Psoas muscle (tissue), 8 donors: ENCODE measurements at regions of chr3 and their contacts with region 1.

Region 1: GRCh38 chr3:24101676-24102168 is 156.6 kb downstream of the NR1D2 start:
- DNase-seq: no peak
- ATAC-seq: no peak
- H3K4me3 ChIP-seq: no peak overlapping the region
- H3K27ac ChIP-seq: no peak overlapping the region
- H3K4me1 ChIP-seq: no peaks in the 10 kb centered on the region
- H3K27me3 ChIP-seq: no peaks in the 10 kb centered on the region
- CTCF ChIP-seq: no peak

Region 2: DNA sequence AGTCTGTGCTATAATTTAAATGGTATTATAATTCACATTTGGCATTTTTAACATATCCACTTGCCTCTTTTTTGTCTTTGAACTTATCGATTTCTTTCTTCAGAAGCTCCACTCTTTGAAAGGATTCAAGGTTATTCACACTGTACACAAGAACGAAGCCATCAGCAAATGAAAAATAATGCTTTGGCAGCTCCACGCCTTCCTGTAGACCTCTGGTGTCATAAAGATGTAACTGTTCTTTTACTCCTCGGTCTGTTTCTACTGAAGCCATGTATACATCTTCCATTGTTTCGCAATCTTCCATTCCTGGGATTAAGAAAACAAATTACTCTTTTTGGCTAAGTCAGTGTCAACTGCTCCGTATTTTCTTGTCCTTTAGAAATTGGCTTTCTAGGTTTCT is 201.0 kb before region 1 on chr3:
- intact Hi-C with region 1: no loop called
- DNase-seq: no peak
- ATAC-seq: no peak
- H3K4me3 ChIP-seq: no peak overlapping the region
- H3K27ac ChIP-seq: no peak overlapping the region
- H3K4me1 ChIP-seq: no peaks in the 10 kb centered on the region
- H3K27me3 ChIP-seq: no peaks in the 10 kb centered on the region
- CTCF ChIP-seq: no peak

Region 3: DNA sequence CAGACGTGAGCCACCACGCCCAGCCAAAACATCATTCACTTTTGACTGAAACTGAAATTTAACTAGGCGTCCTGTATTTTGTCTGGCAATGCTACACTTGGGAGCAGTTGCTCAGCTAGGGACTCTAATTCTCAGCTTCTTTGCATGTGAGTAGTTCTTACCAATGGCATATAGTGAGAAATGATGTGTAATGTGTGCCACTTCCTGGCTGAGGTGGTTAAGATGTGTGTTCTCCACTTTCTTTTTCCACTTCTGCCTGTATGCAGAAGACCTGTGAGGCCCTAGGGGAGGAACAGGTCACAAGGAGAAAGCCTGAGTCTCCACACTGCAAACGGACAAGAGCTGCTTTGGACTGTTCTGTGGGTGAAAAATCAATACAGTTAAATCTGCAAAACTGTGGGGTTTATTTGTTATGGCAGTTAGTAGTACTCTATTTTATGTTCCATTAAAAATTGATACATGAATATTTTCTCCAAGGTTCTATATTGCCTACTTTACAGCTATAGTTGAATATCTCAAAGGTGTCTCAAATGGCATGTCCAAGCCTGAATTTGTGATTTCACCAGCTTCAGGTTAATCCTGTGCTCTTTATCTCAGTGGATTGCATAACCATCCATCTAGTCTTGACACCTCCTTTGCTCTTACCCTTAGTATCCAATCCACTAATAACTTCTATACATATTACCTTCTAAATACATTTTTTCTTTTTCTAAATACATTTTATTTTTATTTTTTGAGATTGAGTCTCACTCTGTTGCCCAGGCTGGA is 97.4 kb before region 1 on chr3:
- intact Hi-C with region 1: loop called in 1 of 2 experiments (anchors 5 kb)
- DNase-seq: no peak
- ATAC-seq: no peak
- H3K4me3 ChIP-seq: no peak overlapping the region
- H3K27ac ChIP-seq: no peak overlapping the region
- H3K4me1 ChIP-seq: no peaks in the 10 kb centered on the region
- H3K27me3 ChIP-seq: no peaks in the 10 kb centered on the region
- CTCF ChIP-seq: no peak

Region 4: DNA sequence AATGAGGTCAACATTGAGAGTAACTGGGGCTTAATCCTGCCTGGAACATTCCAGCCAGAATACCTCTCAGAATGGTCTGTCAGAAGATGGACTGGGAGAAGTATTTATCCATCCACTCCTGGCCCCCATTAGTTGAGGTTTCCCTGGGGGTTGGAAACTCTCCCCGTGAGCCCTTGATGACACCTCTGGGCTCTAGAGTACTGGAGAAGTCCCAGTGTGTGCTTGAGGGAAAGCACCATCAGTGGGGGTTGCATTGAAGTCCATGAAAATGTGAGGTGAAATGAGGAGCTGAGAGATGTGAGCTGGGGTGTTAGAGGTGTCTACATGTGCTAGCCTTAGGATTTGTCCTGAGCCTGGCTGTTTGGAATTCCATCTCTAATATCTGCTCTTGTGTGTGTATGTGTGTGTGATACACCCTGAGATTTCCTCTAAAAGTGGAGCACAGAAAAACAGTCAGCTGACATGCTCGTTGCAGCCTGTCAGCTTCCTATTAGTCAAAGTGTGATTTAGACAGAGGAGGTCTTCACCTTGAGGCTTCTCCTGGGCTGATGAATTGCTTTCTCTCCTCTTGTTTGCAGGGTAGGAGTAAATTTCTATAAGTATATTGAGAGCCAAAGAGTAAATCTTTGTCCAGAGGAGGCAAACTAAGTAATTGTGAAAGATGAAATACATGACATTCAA is 89.0 kb before region 1 on chr3:
- intact Hi-C with region 1: loop called in 1 of 2 experiments (anchors 10 kb)
- DNase-seq: no peak
- ATAC-seq: no peak
- H3K4me3 ChIP-seq: no peak overlapping the region
- H3K27ac ChIP-seq: no peak overlapping the region
- H3K4me1 ChIP-seq: no peaks in the 10 kb centered on the region
- H3K27me3 ChIP-seq: no peaks in the 10 kb centered on the region
- CTCF ChIP-seq: no peak

Region 5: DNA sequence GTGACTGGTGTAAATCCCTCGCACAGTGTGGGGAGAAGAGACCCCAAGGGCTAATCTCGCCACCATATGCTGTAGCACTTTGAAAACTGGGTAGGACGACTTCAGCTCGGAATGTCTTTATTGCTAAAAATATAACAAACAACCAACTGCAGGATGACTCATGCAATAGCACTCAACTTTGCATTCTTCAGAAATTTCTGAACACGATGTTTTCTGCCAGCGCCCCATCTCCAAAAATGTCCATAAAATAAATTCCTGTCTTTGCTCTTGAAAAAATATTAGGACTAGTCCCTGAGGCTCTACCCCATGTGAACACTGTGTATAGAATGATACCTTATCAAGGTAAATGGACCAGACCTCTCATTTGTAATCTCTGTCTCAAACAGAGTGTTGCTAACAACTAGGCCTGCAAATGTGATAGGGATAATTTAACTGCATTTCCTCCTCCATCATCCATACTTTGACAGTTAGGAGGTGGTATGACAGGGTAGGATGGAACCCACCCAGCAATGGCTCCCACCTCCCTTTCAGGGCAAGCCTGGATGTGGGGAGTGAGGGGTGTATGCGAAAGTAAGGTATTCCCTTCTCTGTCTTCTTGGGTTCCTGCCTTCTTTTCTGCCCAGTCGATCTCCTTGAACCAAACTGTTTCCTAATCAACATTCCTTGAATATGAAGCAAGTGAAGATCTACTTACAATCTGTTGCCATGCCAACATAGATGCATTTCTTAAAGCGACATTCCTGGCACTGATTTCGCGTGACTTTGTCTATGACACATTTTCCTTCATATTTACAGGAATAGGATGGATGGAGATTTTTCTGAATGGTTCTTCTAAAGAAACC is 44.5 kb after region 1 on chr3:
- intact Hi-C with region 1: no loop called
- DNase-seq: no peak
- ATAC-seq: peak; percentile 71 to 84 (median 73)
- H3K4me3 ChIP-seq: peak overlapping the region; percentile 13
- H3K27ac ChIP-seq: peak overlapping the region; percentile 79
- H3K4me1 ChIP-seq: peaks cover 27% of the 10 kb centered on the region
- H3K27me3 ChIP-seq: no peaks in the 10 kb centered on the region
- CTCF ChIP-seq: no peak

Region 6: GRCh38 chr3:24220859-24221657 is 119.3 kb after region 1 on chr3:
- intact Hi-C with region 1: no loop called
- DNase-seq: peak; percentile 21 to 58
- ATAC-seq: peak; percentile 87 to 95 (median 92)
- H3K4me3 ChIP-seq: no peak overlapping the region
- H3K27ac ChIP-seq: peak overlapping the region; percentile 56
- H3K4me1 ChIP-seq: peaks cover 11% of the 10 kb centered on the region
- H3K27me3 ChIP-seq: no peaks in the 10 kb centered on the region
- CTCF ChIP-seq: no peak